ENCODE measurements at regions of chr11 and their contacts with region 1.

Region 1: GRCh38 chr11:59753650-59754493 is 1.3 kb upstream of the STX3 start:
- DNase-seq: peak; percentile 65 to 91 (median 85)
- ATAC-seq: peak; percentile 64
- H3K4me3 ChIP-seq: peak overlapping the region; percentile 70 to 97
- H3K4me3 Mint-ChIP-seq: peak overlapping the region; percentile 89
- H3K27ac ChIP-seq: no peak overlapping the region
- H3K27ac Mint-ChIP-seq: no peak overlapping the region
- H3K4me1 ChIP-seq: peaks cover 7% of the 10 kb centered on the region
- H3K4me1 Mint-ChIP-seq: peaks cover 23% of the 10 kb centered on the region
- H3K27me3 ChIP-seq: no peaks in the 10 kb centered on the region
- H3K27me3 Mint-ChIP-seq: peaks cover 9% of the 10 kb centered on the region
- CTCF ChIP-seq: peak; percentile 96

Region 2: GRCh38 chr11:59545179-59546020 is 208.5 kb before region 1 on chr11:
- CTCF ChIA-PET with region 1: no interaction called
- POLR2A ChIA-PET with region 1: no interaction called
- intact Hi-C with region 1: loop called in 1 of 2 experiments (anchors 5 kb)
- DNase-seq: no peak
- ATAC-seq: no peak
- H3K4me3 ChIP-seq: no peak overlapping the region
- H3K4me3 Mint-ChIP-seq: no peak overlapping the region
- H3K27ac ChIP-seq: no peak overlapping the region
- H3K27ac Mint-ChIP-seq: no peak overlapping the region
- H3K4me1 ChIP-seq: peaks cover 4% of the 10 kb centered on the region
- H3K4me1 Mint-ChIP-seq: peaks cover 8% of the 10 kb centered on the region
- H3K27me3 ChIP-seq: no peaks in the 10 kb centered on the region
- H3K27me3 Mint-ChIP-seq: no peaks in the 10 kb centered on the region
- CTCF ChIP-seq: no peak

Region 3: DNA sequence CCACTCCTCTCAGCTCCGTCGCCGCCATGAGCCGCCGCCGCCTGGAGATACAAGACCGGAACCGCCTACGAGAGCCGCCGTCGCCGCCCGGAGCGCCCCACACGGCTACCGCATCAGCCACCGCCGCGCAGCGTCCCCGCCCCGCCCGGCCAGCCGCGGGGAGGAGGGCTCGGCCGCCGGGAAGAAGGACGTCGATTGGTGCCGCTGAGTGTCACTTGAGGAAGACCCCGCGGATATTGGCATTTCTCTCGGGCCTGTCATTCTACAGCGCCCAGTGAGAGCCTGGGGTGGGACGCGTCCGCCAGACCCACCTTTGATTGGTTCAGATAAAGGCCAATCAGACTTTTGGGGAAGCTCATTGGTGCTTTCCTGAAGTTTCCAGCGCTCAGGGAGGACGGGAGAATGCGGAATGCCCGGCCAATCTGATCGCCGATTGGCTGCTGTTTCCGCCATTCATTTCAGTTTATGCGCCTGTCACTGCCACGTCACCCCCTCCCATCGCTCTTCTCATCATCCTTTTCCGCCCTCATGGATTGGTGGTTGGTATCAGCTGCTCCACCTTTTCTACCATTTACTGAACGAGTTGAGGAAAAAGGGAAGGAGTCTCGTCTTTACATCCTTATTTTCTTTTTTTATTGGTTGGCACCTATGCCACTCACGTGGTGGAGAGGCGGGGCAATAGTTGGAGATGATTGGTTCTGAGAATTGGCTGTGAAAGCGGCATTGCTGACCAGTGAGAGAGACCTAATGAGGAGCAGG is 138.1 kb before region 1 on chr11 and contains the start of gene OSBP:
- CTCF ChIA-PET with region 1: no interaction called
- POLR2A ChIA-PET with region 1: interaction called, 4 read pairs
- intact Hi-C with region 1: loop called in 1 of 2 experiments (anchors 2 kb)
- DNase-seq: peak; percentile 92 to 100 (median 96)
- ATAC-seq: peak; percentile 73
- H3K4me3 ChIP-seq: peak within 1 kb of the TSS; percentile 86 to 96
- H3K4me3 Mint-ChIP-seq: peak within 1 kb of the TSS; percentile 87
- H3K27ac ChIP-seq: peak within 1 kb of the TSS; percentile 92 to 100
- H3K27ac Mint-ChIP-seq: peak within 1 kb of the TSS; percentile 97
- H3K4me1 ChIP-seq: peaks cover 41% of the 10 kb centered on the region
- H3K4me1 Mint-ChIP-seq: peaks cover 46% of the 10 kb centered on the region
- H3K27me3 ChIP-seq: no peaks in the 10 kb centered on the region
- H3K27me3 Mint-ChIP-seq: no peaks in the 10 kb centered on the region
- CTCF ChIP-seq: no peak
- total RNA-seq, gene OSBP: 66.0 to 66.3 TPM

Region 4: DNA sequence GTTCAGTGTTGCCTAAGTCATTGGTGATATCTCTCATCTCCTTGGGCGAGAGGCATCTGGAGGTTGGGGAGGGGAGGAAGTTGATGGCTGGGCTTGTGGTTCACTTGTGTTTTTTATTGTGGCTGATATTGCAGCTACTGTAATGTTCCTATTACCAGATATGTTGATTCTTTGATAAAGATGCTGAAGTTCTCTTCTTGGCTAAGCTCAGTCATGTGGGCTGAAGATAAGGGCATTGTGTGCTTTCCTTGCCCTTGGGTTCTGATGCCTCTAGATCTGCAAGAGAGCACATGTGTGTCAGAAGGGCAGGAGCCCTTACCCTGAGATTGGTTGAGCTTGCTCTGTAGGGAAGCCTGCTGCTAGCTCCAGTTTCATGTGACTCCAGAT is 13.3 kb after region 1 on chr11:
- CTCF ChIA-PET with region 1: interaction called, 45 read pairs
- POLR2A ChIA-PET with region 1: interaction called, 6 read pairs
- intact Hi-C with region 1: no loop called
- DNase-seq: peak in 3 of 9 experiments; percentile 19 to 45 (median 37)
- ATAC-seq: peak; percentile 46
- H3K4me3 ChIP-seq: no peak overlapping the region
- H3K4me3 Mint-ChIP-seq: peak overlapping the region; percentile 12
- H3K27ac ChIP-seq: no peak overlapping the region
- H3K27ac Mint-ChIP-seq: peak overlapping the region; percentile 52
- H3K4me1 ChIP-seq: peaks cover 26% of the 10 kb centered on the region
- H3K4me1 Mint-ChIP-seq: peaks cover 20% of the 10 kb centered on the region
- H3K27me3 ChIP-seq: no peaks in the 10 kb centered on the region
- H3K27me3 Mint-ChIP-seq: no peaks in the 10 kb centered on the region
- CTCF ChIP-seq: no peak

Region 5: DNA sequence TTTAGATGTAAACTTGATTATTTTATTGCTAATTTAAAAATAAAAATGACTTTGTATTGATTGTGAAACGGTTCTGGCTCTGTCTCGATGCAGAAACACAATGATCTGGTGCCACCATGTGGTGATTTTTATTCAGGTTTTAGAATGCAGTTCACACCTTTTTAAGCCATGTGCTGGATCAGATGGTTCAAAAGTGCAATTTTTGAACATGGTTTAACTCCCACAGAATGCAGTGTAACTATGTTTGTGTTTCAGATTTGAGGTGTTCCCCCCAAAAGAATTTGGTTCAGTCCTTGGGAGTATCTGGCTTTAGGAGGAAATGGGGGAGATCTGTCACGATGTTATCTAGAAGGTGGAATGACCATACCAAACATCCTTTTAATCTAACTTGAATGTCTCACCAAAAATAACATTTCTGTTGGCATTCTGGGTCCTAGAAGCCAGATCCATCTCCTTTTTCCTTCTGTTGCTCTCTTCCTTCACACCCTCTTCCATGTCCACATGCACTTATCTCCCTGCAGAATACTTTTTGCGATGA is 48.8 kb after region 1 on chr11:
- CTCF ChIA-PET with region 1: interaction called, 177 read pairs
- POLR2A ChIA-PET with region 1: interaction called, 8 read pairs
- intact Hi-C with region 1: loop called (anchors 1 kb)
- DNase-seq: peak in 6 of 9 experiments; percentile 26 to 78 (median 42)
- ATAC-seq: peak; percentile 70
- H3K4me3 ChIP-seq: no peak overlapping the region
- H3K4me3 Mint-ChIP-seq: no peak overlapping the region
- H3K27ac ChIP-seq: no peak overlapping the region
- H3K27ac Mint-ChIP-seq: no peak overlapping the region
- H3K4me1 ChIP-seq: no peaks in the 10 kb centered on the region
- H3K4me1 Mint-ChIP-seq: no peaks in the 10 kb centered on the region
- H3K27me3 ChIP-seq: no peaks in the 10 kb centered on the region
- H3K27me3 Mint-ChIP-seq: no peaks in the 10 kb centered on the region
- CTCF ChIP-seq: peak; percentile 72

Region 6: DNA sequence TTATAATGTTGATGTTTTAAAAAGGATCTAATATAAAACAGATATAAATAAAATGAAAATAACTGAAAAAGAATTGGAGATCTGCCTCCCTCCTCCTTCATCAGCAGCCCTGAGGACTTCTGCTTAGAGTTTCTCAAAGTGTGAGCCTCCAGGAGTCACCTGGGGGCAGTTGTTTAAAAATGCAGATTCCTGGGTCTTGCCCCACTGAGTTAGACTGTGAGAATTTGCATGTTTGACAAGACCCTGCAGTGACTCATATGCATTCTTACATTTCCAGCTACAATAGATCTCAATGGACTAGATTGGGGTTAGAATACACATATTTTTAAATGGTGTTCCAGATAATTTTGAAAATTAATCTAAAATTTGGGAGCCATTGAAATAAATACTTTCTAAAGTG is 123.9 kb after region 1 on chr11:
- CTCF ChIA-PET with region 1: no interaction called
- POLR2A ChIA-PET with region 1: no interaction called
- intact Hi-C with region 1: no loop called
- DNase-seq: no peak
- ATAC-seq: no peak
- H3K4me3 ChIP-seq: no peak overlapping the region
- H3K4me3 Mint-ChIP-seq: no peak overlapping the region
- H3K27ac ChIP-seq: no peak overlapping the region
- H3K27ac Mint-ChIP-seq: no peak overlapping the region
- H3K4me1 ChIP-seq: no peaks in the 10 kb centered on the region
- H3K4me1 Mint-ChIP-seq: no peaks in the 10 kb centered on the region
- H3K27me3 ChIP-seq: no peaks in the 10 kb centered on the region
- H3K27me3 Mint-ChIP-seq: peaks cover 20% of the 10 kb centered on the region
- CTCF ChIP-seq: no peak

Region 7: GRCh38 chr11:60251485-60252212 is 497.8 kb after region 1 on chr11:
- CTCF ChIA-PET with region 1: no interaction called
- POLR2A ChIA-PET with region 1: no interaction called
- intact Hi-C with region 1: loop called in 1 of 2 experiments (anchors 5 kb)
- DNase-seq: peak in 3 of 9 experiments; percentile 7 to 30 (median 11)
- ATAC-seq: no peak
- H3K4me3 ChIP-seq: no peak overlapping the region
- H3K4me3 Mint-ChIP-seq: no peak overlapping the region
- H3K27ac ChIP-seq: no peak overlapping the region
- H3K27ac Mint-ChIP-seq: no peak overlapping the region
- H3K4me1 ChIP-seq: no peaks in the 10 kb centered on the region
- H3K4me1 Mint-ChIP-seq: no peaks in the 10 kb centered on the region
- H3K27me3 ChIP-seq: no peaks in the 10 kb centered on the region
- H3K27me3 Mint-ChIP-seq: peaks cover 22% of the 10 kb centered on the region
- CTCF ChIP-seq: peak; percentile 51